ENCODE measurements at regions of chr14 and their contacts with region 1.

Region 1: DNA sequence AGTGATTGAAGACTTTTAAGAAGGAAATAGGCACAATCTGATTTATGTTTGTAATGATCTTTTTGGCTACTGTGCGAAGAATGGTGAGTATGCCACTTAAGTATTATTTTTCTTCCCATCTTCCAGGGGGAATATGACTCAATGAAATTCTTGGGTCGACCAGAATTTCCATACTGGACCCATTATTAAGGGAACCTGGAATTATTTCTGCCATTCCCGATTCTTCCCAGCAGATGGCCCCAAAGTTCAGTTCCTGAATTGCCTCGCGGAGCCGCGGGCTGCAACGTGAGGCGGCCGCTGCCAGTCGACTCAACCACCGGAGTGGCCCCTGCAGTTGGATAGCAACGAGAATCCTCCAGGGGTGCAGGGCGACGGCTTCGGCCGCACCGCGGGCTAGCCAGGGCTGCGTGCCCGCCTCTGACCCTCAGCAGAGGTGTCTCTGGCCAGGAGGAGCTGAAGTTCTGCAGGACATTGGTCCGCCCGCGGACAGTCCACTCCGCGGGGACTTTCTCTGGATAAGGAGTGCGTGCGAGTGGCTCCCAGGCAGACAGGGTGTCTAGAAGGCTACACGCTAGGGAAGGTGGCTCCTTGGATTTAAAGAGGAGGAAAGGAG is 628 bp upstream of the TSHR start:
- DNase-seq: peak; percentile 72
- ATAC-seq: peak; percentile 95
- H3K4me3 ChIP-seq: peak overlapping the region; percentile 72
- H3K27ac ChIP-seq: no peak overlapping the region
- H3K4me1 ChIP-seq: no peaks in the 10 kb centered on the region
- H3K27me3 ChIP-seq: peaks cover 23% of the 10 kb centered on the region
- CTCF ChIP-seq: peak; percentile 91
- POLR2A ChIP-seq: no peak
- RAD21 ChIP-seq: peak; percentile 75

Region 2: DNA sequence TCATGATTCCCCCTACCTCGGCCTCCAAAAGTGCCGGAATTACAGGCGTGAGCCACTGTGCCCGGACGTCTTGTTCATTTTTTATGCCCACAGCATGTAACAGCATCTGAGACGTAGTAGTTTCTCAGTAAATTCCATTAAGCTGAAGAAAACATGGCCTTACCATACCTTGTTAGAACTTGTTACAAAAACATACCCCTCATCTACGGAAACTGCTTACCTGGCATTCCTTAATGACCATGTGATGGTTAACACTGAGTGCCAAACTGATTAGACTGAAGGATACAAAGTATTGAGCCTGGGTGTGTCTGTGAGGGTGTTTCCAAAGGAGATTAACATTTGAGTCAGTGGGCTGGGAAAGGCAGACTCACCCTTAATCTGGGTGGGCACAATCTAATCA is 200.1 kb before region 1 on chr14:
- CTCF ChIA-PET with region 1: no interaction called
- POLR2A ChIA-PET with region 1: no interaction called
- dilution Hi-C with region 1: no loop called
- in situ Hi-C with region 1: no loop called
- intact Hi-C with region 1: no loop called
- DNase-seq: no peak
- ATAC-seq: no peak
- H3K4me3 ChIP-seq: no peak overlapping the region
- H3K27ac ChIP-seq: no peak overlapping the region
- H3K4me1 ChIP-seq: no peaks in the 10 kb centered on the region
- H3K27me3 ChIP-seq: no peaks in the 10 kb centered on the region
- CTCF ChIP-seq: no peak
- POLR2A ChIP-seq: no peak
- RAD21 ChIP-seq: no peak

Region 3: DNA sequence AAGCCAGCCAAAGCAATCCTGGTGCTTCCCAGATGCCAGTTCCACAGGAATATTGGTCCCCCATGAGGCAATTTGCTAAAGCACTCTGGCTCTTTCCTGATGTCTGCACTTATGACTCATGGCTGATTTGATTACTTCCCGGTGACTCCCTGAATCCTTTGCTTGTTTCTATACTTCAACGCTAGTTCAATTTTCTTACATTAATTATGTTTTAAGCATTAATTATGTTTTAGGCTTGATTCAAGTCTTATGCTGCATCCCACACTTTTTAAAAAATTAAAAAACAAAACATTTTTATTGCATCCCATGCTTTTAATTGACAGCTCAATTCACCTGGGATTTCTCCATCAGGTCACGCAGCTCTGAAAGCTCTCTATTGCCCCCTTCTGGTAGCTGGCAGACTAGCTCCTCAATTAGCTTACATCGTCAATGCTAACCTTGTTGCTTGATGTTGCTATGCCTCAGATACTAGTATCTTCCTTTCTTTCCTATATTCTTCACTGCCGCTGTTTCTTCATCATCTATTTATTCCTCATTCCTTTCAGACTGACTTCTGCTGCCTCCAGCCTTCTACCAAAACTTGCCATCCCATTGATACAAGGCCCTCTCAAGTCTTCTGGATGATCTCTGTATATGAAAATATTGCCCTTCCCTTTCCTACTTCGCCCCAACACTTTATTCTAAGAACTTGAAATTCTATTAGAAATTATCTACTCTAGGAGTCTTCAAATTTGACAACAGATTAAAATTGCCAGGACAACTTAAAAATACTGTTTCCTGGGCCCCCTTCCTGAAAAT is 32.6 kb after region 1 on chr14:
- CTCF ChIA-PET with region 1: interaction called, 17 read pairs
- POLR2A ChIA-PET with region 1: no interaction called
- dilution Hi-C with region 1: no loop called
- in situ Hi-C with region 1: no loop called
- intact Hi-C with region 1: loop called (anchors 1 kb)
- DNase-seq: peak; percentile 69
- ATAC-seq: peak; percentile 89
- H3K4me3 ChIP-seq: no peak overlapping the region
- H3K27ac ChIP-seq: no peak overlapping the region
- H3K4me1 ChIP-seq: no peaks in the 10 kb centered on the region
- H3K27me3 ChIP-seq: peaks cover 4% of the 10 kb centered on the region
- CTCF ChIP-seq: peak; percentile 82
- POLR2A ChIP-seq: no peak
- RAD21 ChIP-seq: peak; percentile 76

Region 4: GRCh38 chr14:81170104-81170828 is 215.5 kb after region 1 on chr14:
- CTCF ChIA-PET with region 1: interaction called, 3 read pairs
- POLR2A ChIA-PET with region 1: no interaction called
- dilution Hi-C with region 1: no loop called
- in situ Hi-C with region 1: no loop called
- intact Hi-C with region 1: loop called (anchors 1 kb)
- DNase-seq: peak; percentile 82
- ATAC-seq: peak; percentile 98
- H3K4me3 ChIP-seq: peak overlapping the region; percentile 47
- H3K27ac ChIP-seq: peak overlapping the region; percentile 73
- H3K4me1 ChIP-seq: peaks cover 9% of the 10 kb centered on the region; the same call in 1 of the 2 replicates
- H3K27me3 ChIP-seq: no peaks in the 10 kb centered on the region
- CTCF ChIP-seq: peak; percentile 88
- POLR2A ChIP-seq: peak; percentile 62
- RAD21 ChIP-seq: peak; percentile 64

Region 5: GRCh38 chr14:81220830-81221578 is 266.2 kb after region 1 on chr14 and contains the start of gene GTF2A1:
- CTCF ChIA-PET with region 1: no interaction called
- POLR2A ChIA-PET with region 1: no interaction called
- dilution Hi-C with region 1: no loop called
- in situ Hi-C with region 1: no loop called
- intact Hi-C with region 1: loop called (anchors 1 kb)
- DNase-seq: peak; percentile 96
- ATAC-seq: peak; percentile 88
- H3K4me3 ChIP-seq: peak within 1 kb of the TSS; percentile 76
- H3K27ac ChIP-seq: peak within 1 kb of the TSS; percentile 99
- H3K4me1 ChIP-seq: no peaks in the 10 kb centered on the region; the same call in 1 of the 2 replicates
- H3K27me3 ChIP-seq: no peaks in the 10 kb centered on the region
- CTCF ChIP-seq: no peak
- POLR2A ChIP-seq: peak; percentile 74
- RAD21 ChIP-seq: no peak
- total RNA-seq, gene GTF2A1: 41.9 and 60.4 TPM in 2 replicates